Calu3 (cell line): ENCODE measurements at regions of chr14 and their contacts with region 1.

Region 1: GRCh38 chr14:34982417-34983147 is at the start of gene SRP54:
- DNase-seq: peak; percentile 99
- H3K4me3 Mint-ChIP-seq: no peak within 1 kb of the TSS
- H3K27ac Mint-ChIP-seq: no peak within 1 kb of the TSS
- H3K4me1 Mint-ChIP-seq: no peaks in the 10 kb centered on the region
- H3K27me3 Mint-ChIP-seq: no peaks in the 10 kb centered on the region
- CTCF ChIP-seq: no peak
- total RNA-seq, gene SRP54: 57.6 and 60.2 TPM in 2 replicates

Region 2: DNA sequence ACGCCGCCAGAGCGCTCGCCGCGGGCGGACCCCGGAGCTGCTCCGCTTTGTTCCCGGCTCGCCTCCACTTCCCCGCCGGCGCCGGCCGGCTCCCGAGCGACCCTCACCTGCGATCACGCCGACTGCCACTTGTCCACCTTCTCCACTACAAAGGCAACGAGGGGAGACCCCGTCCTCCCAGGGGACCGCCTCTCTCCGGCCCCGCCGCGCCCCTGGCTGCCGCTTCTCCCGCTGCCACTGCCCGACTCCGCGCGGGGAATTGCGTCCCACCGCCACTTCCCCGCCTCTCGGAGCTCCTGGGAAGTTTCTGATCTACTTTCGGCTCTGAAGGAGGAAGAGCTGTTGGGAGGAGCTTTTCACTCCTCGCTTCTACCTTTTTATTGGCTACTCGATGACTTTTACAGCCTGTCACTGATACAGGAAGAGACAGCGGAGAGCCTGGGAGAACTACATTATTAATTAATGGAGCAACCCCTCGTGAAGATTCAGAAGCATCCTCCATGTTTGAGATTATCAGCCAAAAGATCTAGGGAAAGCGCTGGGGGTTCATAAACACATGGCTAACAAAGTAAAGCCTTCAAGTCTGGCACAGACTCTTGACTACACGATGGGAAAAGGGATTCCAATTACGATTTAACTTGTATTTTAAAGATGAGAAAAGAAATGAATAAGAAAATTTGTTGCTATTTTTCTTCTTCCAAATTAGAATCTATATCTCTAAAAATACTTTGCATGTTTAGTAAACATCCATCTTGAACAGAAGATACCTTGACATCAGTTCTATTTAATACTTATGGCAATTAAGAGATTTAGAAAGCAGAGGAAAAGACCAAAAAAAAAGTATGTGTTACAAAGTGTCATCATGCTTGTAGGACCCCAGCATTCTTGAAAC is 107.3 kb before region 1 on chr14 and contains the start of gene BAZ1A:
- CTCF ChIA-PET with region 1: interaction called, 3 read pairs
- intact Hi-C with region 1: loop called (anchors 1 kb)
- DNase-seq: peak; percentile 58
- H3K4me3 Mint-ChIP-seq: peak within 1 kb of the TSS; percentile 100
- H3K27ac Mint-ChIP-seq: peak within 1 kb of the TSS; percentile 99
- H3K4me1 Mint-ChIP-seq: peaks cover 8% of the 10 kb centered on the region
- H3K27me3 Mint-ChIP-seq: no peaks in the 10 kb centered on the region
- CTCF ChIP-seq: no peak
- total RNA-seq, gene BAZ1A: 35.7 and 38.1 TPM in 2 replicates